ENCODE measurements at regions of chr12 and their contacts with region 1.

Region 1: GRCh38 chr12:6851921-6852650 is at the start of gene USP5:
- DNase-seq: peak; percentile 99 to 100 (median 99)
- H3K4me3 ChIP-seq: peak within 1 kb of the TSS; percentile 62 to 97
- H3K4me3 Mint-ChIP-seq: peak within 1 kb of the TSS; percentile 88 to 99 (median 95)
- H3K27ac ChIP-seq: peak within 1 kb of the TSS; percentile 92
- H3K27ac Mint-ChIP-seq: peak within 1 kb of the TSS; percentile 82 to 100 (median 99)
- H3K4me1 ChIP-seq: peaks cover 37% of the 10 kb centered on the region
- H3K4me1 Mint-ChIP-seq: peaks cover 18 to 36% (median 27%) of the 10 kb centered on the region in 4 donors
- H3K27me3 ChIP-seq: no peaks in the 10 kb centered on the region
- H3K27me3 Mint-ChIP-seq: no peaks in the 10 kb centered on the region
- total RNA-seq, gene USP5: 65.2 to 69.3 TPM

Region 2: GRCh38 chr12:6607751-6608591 is 244.1 kb before region 1 on chr12:
- CTCF ChIA-PET with region 1: no interaction called
- POLR2A ChIA-PET with region 1: interaction called, 9 read pairs
- intact Hi-C with region 1: loop called (anchors 1 kb)
- DNase-seq: peak; percentile 74 to 90 (median 79)
- H3K4me3 ChIP-seq: no peak overlapping the region
- H3K4me3 Mint-ChIP-seq: no peak overlapping the region
- H3K27ac ChIP-seq: peak overlapping the region; percentile 84
- H3K27ac Mint-ChIP-seq: no peak overlapping the region
- H3K4me1 ChIP-seq: peaks cover 58% of the 10 kb centered on the region
- H3K4me1 Mint-ChIP-seq: peaks cover 41 to 55% (median 47%) of the 10 kb centered on the region in 4 donors
- H3K27me3 ChIP-seq: no peaks in the 10 kb centered on the region
- H3K27me3 Mint-ChIP-seq: no peaks in the 10 kb centered on the region

Region 3: GRCh38 chr12:6752921-6753771 is 98.9 kb before region 1 on chr12 and contains the start of gene MLF2:
- CTCF ChIA-PET with region 1: interaction called, 13 read pairs
- POLR2A ChIA-PET with region 1: interaction called, 47 read pairs
- intact Hi-C with region 1: loop called (anchors 1 kb)
- DNase-seq: peak; percentile 96 to 98 (median 97)
- H3K4me3 ChIP-seq: peak within 1 kb of the TSS; percentile 62 to 77
- H3K4me3 Mint-ChIP-seq: peak within 1 kb of the TSS; percentile 94 to 98 (median 96)
- H3K27ac ChIP-seq: peak within 1 kb of the TSS; percentile 84
- H3K27ac Mint-ChIP-seq: peak within 1 kb of the TSS; percentile 99 to 100 (median 99)
- H3K4me1 ChIP-seq: peaks cover 13% of the 10 kb centered on the region
- H3K4me1 Mint-ChIP-seq: peaks cover 10 to 24% (median 17%) of the 10 kb centered on the region in 4 donors
- H3K27me3 ChIP-seq: no peaks in the 10 kb centered on the region
- H3K27me3 Mint-ChIP-seq: peaks cover 0 to 1% of the 10 kb centered on the region in 2 donors
- total RNA-seq, gene MLF2: 79.8 to 80.3 TPM

Region 4: DNA sequence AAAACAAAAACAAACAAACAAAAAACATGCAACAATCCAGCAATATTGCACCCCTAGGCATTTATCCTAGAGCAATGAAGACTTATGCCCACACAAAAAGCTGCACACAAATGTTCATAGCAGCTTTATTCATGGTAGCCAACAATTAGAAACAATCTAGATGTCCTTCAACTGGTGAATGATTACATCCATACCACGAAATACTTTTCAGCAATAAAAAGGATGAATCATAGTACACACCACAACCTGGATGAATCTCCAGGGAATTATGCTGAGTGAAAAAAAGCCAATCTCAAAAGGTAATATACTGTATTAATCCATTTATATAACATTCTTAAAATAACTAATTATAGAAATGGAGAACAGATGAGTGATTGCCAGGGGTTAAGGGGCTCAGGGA is 44.9 kb before region 1 on chr12:
- CTCF ChIA-PET with region 1: no interaction called
- POLR2A ChIA-PET with region 1: no interaction called
- intact Hi-C with region 1: no loop called
- DNase-seq: no peak
- H3K4me3 ChIP-seq: no peak overlapping the region
- H3K4me3 Mint-ChIP-seq: no peak overlapping the region
- H3K27ac ChIP-seq: no peak overlapping the region
- H3K27ac Mint-ChIP-seq: peak overlapping the region in 1 of 7 donors; percentile 72
- H3K4me1 ChIP-seq: no peaks in the 10 kb centered on the region
- H3K4me1 Mint-ChIP-seq: peaks cover 0 to 24% (median 12%) of the 10 kb centered on the region in 4 donors
- H3K27me3 ChIP-seq: no peaks in the 10 kb centered on the region
- H3K27me3 Mint-ChIP-seq: no peaks in the 10 kb centered on the region

Region 5: DNA sequence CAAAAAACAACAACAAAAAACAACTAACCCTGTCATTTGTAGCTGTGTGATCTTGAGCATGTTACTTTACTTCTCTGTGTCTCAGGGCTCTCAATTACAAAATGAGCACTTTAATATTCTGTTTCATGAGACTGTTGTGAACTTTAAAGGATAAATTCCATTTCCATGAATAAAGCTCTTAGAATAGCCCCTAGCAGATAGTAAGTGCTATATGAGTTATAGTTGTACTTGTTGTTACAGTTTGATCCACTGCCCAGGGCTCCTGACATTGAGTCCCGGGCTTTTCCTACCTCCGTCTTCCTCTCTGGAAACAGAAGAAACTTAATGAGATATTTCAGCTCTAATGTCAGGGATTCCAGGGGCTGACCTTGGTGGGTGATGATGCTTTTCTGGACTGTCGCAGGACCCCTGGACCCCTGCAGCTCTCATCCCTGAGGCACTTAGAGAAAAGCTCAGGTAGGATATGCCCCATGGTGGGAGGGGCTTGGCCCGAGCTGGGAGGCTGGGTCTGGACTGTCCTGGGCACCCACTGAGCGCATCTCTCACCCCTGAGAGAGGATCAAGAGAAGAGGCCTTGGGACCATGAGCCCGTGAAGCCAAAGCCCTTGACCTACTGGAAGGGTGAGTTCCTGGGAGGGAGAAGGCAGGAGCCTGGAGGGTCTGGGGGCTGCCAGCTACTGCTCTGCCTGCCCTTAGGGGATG is 18.7 kb before region 1 on chr12:
- CTCF ChIA-PET with region 1: interaction called, 36 read pairs
- POLR2A ChIA-PET with region 1: interaction called, 24 read pairs
- intact Hi-C with region 1: loop called (anchors 2 kb)
- DNase-seq: no peak
- H3K4me3 ChIP-seq: no peak overlapping the region
- H3K4me3 Mint-ChIP-seq: peak overlapping the region in 1 of 8 donors; percentile 25
- H3K27ac ChIP-seq: no peak overlapping the region
- H3K27ac Mint-ChIP-seq: no peak overlapping the region
- H3K4me1 ChIP-seq: peaks cover 16% of the 10 kb centered on the region
- H3K4me1 Mint-ChIP-seq: peaks cover 2 to 12% (median 7%) of the 10 kb centered on the region in 4 donors
- H3K27me3 ChIP-seq: peaks cover 8% of the 10 kb centered on the region
- H3K27me3 Mint-ChIP-seq: peaks cover 1 to 8% of the 10 kb centered on the region in 2 donors

Region 6: GRCh38 chr12:6904280-6905278 is 52.5 kb after region 1 on chr12 and contains the start of gene LRRC23:
- CTCF ChIA-PET with region 1: no interaction called
- POLR2A ChIA-PET with region 1: no interaction called
- intact Hi-C with region 1: loop called (anchors 1 kb)
- DNase-seq: peak; percentile 97 to 99 (median 98)
- H3K4me3 ChIP-seq: peak within 1 kb of the TSS; percentile 74 to 95
- H3K4me3 Mint-ChIP-seq: no peak within 1 kb of the TSS
- H3K27ac ChIP-seq: peak within 1 kb of the TSS; percentile 86
- H3K27ac Mint-ChIP-seq: no peak within 1 kb of the TSS
- H3K4me1 ChIP-seq: peaks cover 19% of the 10 kb centered on the region
- H3K4me1 Mint-ChIP-seq: peaks cover 0 to 8% (median 6%) of the 10 kb centered on the region in 4 donors
- H3K27me3 ChIP-seq: no peaks in the 10 kb centered on the region
- H3K27me3 Mint-ChIP-seq: no peaks in the 10 kb centered on the region
- total RNA-seq, gene LRRC23: 8.3 to 9.1 TPM

Region 7: DNA sequence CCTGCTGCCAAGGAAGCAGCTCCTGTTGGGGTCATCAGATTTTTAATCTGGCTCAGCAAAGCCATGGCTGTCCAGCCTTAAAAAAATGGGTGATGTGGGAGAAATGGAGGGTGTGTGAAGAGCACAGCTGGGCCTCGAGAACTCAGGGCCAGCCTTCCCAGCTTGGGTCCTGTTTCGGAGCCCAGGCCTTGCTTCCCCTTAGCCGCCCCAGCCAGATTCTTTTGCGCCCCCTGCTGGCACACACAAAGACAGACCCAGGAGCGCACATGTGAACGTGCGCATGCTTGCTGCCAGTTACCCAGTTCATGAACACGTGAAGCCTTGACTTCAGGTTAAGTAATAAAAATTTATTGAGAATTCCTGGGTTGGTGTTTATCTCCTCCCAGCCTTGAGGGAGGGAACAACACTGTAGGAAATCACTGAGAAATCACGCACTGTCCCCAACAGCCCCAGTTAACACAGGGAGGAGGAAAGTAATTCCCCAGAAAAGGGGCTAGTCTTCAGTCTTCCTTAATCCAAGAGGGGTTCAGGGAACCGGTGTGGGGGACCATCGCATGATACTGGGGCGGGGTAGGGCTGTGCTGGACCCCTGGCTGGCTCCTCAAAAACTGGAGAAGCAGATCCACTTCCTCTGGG is 113.1 kb after region 1 on chr12:
- CTCF ChIA-PET with region 1: interaction called, 3 read pairs
- POLR2A ChIA-PET with region 1: interaction called, 16 read pairs
- intact Hi-C with region 1: loop called (anchors 1 kb)
- DNase-seq: peak; percentile 85 to 87 (median 85)
- H3K4me3 ChIP-seq: no peak overlapping the region
- H3K4me3 Mint-ChIP-seq: peak overlapping the region in 1 of 8 donors; percentile 39
- H3K27ac ChIP-seq: peak overlapping the region; percentile 53
- H3K27ac Mint-ChIP-seq: peak overlapping the region; percentile 88 to 94 (median 93)
- H3K4me1 ChIP-seq: peaks cover 68% of the 10 kb centered on the region
- H3K4me1 Mint-ChIP-seq: peaks cover 32 to 63% (median 47%) of the 10 kb centered on the region in 4 donors
- H3K27me3 ChIP-seq: no peaks in the 10 kb centered on the region
- H3K27me3 Mint-ChIP-seq: no peaks in the 10 kb centered on the region

Measured in CD4-positive, alpha-beta memory T cell (primary cell).